Gastrocnemius medialis (tissue), 4 donors: ENCODE measurements at regions of chr5 and their contacts with region 1.

Region 1: GRCh38 chr5:139417214-139417613 is 13.3 kb upstream of the SPATA24 start:
- DNase-seq: peak; percentile 64 to 79
- ATAC-seq: peak; percentile 69 to 79
- H3K4me3 ChIP-seq: no peak overlapping the region
- H3K27ac ChIP-seq: peak overlapping the region; percentile 83 to 90 (median 87)
- H3K4me1 ChIP-seq: peaks cover 58 to 61% of the 10 kb centered on the region in 2 donors
- H3K27me3 ChIP-seq: no peaks in the 10 kb centered on the region
- CTCF ChIP-seq: no peak
- POLR2A ChIP-seq: no peak

Region 2: DNA sequence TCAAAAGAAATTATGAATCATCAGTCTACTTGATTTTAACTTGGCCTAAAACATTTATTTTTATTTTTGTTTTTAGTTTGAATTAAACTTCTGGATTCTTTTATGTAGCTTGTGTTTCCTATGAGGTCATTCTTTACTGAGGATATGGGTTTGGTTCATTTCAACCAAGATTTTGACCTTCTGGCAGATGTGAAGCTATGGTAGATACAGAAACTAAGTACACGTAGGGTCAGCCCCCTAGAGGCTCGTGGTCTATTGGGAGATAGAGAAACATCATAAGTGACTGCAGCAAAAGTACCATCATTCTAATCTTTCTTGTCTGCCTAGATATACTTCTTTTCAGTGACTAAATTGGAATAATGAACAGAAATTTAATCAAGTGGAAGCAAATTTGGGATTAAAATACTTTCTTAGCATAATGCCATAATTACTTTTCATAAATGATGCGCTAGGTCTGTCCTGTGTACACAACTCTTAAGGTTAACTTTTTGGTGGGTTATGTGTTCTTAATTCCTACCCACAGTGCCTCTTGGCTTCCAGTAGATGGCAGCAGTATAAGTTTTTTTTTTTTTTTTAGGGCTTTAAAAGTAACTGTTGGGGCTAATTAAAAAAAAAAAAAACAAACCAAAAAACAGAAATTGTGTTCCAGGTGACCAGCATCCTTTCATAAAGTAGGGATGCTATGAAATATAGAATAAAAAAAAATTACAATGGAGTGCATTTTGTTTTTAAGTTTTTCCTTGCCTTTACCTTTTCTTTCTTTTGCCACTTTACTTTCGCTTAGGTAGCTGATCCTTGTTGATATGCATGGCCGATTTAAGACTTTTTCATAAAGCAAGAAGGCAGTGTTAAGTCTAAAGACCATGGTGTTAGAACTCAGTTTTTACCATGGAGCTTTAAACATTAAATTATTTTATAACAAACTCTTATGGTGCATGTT is 592.0 kb before region 1 on chr5:
- in situ Hi-C with region 1: no loop called
- intact Hi-C with region 1: no loop called
- DNase-seq: no peak
- ATAC-seq: peak in 1 of 2 donors; percentile 50
- H3K4me3 ChIP-seq: no peak overlapping the region
- H3K27ac ChIP-seq: peak overlapping the region in 1 of 4 donors; percentile 0
- H3K4me1 ChIP-seq: peaks cover 11 to 25% of the 10 kb centered on the region in 2 donors
- H3K27me3 ChIP-seq: no peaks in the 10 kb centered on the region
- CTCF ChIP-seq: peak in 4 of 5 experiments; percentile 27 to 63 (median 48)
- POLR2A ChIP-seq: no peak

Region 3: GRCh38 chr5:139611703-139612584 is 194.7 kb after region 1 on chr5:
- in situ Hi-C with region 1: no loop called
- intact Hi-C with region 1: no loop called
- DNase-seq: no peak
- ATAC-seq: no peak
- H3K4me3 ChIP-seq: no peak overlapping the region
- H3K27ac ChIP-seq: peak overlapping the region in 2 of 4 donors; percentile 18 to 20
- H3K4me1 ChIP-seq: peaks cover 19 to 20% of the 10 kb centered on the region in 2 donors
- H3K27me3 ChIP-seq: no peaks in the 10 kb centered on the region
- CTCF ChIP-seq: no peak
- POLR2A ChIP-seq: no peak

Region 4: GRCh38 chr5:139690064-139690802 is 273.0 kb after region 1 on chr5:
- in situ Hi-C with region 1: no loop called
- intact Hi-C with region 1: loop called (anchors 10 kb)
- DNase-seq: no peak
- ATAC-seq: no peak
- H3K4me3 ChIP-seq: no peak overlapping the region
- H3K27ac ChIP-seq: peak overlapping the region; percentile 35 to 98 (median 80)
- H3K4me1 ChIP-seq: peaks cover 51 to 66% of the 10 kb centered on the region in 2 donors
- H3K27me3 ChIP-seq: no peaks in the 10 kb centered on the region
- CTCF ChIP-seq: peak; percentile 48 to 80 (median 71)
- POLR2A ChIP-seq: no peak